Activated T-helper 2 cell treated with anti-CD3 and anti-CD28 coated beads, Interferon-gamma antibody, Interleukin-2, Interleukin-4, amounts not matched to agents 10 μg/mL and 5 μg/mL and 100 μg/mL, durations not matched to agents 14 hours and 24 hours and 36 hours (primary cell): ENCODE measurements at regions of chr4 and their contacts with region 1.

Region 1: DNA sequence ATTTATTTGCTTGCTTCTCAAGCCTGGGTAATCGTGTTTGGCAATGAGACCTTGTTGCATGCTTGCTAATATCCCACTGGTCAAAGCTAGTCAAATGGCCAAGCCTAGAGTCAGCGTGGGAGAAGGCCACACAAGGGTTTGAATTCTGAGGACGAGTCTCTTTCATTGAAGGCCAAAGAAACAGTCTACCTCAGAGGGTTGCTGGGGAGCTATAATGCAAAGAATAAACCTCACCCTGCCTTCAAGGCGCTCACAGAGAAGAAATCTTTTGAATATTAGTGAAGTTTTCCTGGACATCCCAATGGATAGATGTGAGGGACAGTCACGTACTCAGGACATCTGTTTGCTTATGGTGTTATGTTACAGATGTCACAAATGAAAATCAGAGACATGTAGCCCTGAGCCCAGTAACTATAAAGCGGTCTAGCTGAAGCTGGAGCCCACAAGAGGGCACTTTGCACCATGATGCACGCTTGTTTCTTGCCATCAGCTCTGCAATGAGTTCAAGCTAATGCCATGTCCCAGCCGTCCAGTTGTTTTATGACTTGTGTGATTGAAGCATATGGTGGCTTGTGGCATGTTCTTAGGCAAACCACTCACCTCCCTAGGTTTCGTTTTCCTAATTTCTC is 1.1 kb upstream of the TLR3 start:
- DNase-seq: no peak
- H3K4me3 Mint-ChIP-seq: no peak overlapping the region
- H3K27ac Mint-ChIP-seq: no peak overlapping the region
- H3K4me1 Mint-ChIP-seq: peaks cover 9% of the 10 kb centered on the region
- H3K27me3 Mint-ChIP-seq: peaks cover 15% of the 10 kb centered on the region

Region 2: GRCh38 chr4:186137196-186137794 is 69.4 kb after region 1 on chr4:
- intact Hi-C with region 1: loop called (anchors 2 kb)
- DNase-seq: no peak
- H3K4me3 Mint-ChIP-seq: no peak overlapping the region
- H3K27ac Mint-ChIP-seq: no peak overlapping the region
- H3K4me1 Mint-ChIP-seq: peaks cover 11% of the 10 kb centered on the region
- H3K27me3 Mint-ChIP-seq: peaks cover 11% of the 10 kb centered on the region

Region 3: GRCh38 chr4:187309456-187309855 is 1241.6 kb after region 1 on chr4:
- intact Hi-C with region 1: no loop called
- DNase-seq: no peak
- H3K4me3 Mint-ChIP-seq: no peak overlapping the region
- H3K27ac Mint-ChIP-seq: no peak overlapping the region
- H3K4me1 Mint-ChIP-seq: no peaks in the 10 kb centered on the region
- H3K27me3 Mint-ChIP-seq: no peaks in the 10 kb centered on the region